Activated CD8-positive, alpha-beta T cell treated with anti-CD3 and anti-CD28 coated beads for 36 hours (primary cell): ENCODE measurements at regions of chr22 and their contacts with region 1.

Region 1: DNA sequence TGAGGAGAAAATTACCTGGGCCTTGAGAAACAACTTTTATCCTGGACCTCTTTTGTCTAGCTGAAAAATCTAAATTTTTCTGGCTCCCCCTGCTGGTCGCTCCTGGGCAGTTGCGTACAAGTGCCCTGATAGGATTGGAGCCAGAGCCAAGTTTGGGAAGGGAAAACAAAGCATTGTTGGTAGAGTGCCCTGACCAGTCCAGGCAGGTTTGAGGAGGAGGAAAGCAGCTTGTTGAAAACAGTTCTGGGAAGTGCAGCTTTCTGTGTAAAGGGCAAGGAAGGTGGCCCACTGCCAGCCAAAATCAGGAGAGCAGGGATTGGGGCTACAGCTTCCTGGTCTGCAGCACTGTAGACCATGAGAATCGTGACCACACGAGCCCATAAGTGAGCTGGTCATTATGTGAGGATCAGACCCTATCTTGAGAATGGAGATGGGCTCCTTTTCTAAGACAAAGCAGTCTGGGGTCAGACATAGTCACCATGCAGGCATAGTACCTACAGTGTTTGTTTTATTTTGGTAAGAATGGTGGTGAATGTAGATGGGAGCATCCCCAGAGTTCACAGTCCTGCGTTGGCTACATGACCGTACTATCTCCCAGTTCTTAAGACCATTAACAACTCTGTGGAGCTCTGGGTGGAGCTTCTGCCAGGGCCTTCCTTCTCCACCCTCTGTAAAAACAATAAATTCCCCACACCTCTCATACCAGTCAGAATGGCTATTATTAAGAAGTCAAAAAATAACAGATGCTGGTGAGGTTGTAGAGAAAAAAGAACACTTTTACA is 21.3 kb upstream of the PIK3IP1 start:
- DNase-seq: peak; percentile 80
- ATAC-seq: peak; percentile 70
- H3K4me3 Mint-ChIP-seq: no peak overlapping the region
- H3K27ac Mint-ChIP-seq: no peak overlapping the region
- H3K4me1 Mint-ChIP-seq: peaks cover 10% of the 10 kb centered on the region
- H3K27me3 Mint-ChIP-seq: no peaks in the 10 kb centered on the region
- CTCF ChIP-seq: peak; percentile 95

Region 2: DNA sequence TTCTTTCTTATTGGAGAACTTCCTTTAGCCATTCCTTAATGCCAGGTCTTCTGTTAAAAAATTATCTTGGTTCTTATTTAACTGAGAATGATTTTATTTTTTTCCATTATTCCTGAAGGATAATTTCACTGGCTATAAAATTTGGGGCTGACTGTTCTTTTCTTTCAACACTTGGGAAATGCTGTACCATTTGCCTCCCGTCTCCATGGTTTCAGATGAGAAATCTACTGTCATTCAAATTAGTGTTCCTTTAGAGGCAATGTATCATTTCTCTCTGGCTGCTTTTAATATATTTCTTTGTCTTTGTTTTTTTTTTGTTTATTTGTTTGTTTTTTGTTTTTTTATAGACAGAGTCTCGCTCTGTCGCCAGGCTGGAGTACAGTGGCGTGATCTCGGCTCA is 284.3 kb before region 1 on chr22:
- CTCF ChIA-PET with region 1: no interaction called
- POLR2A ChIA-PET with region 1: no interaction called
- intact Hi-C with region 1: no loop called
- DNase-seq: no peak
- ATAC-seq: no peak
- H3K4me3 Mint-ChIP-seq: no peak overlapping the region
- H3K27ac Mint-ChIP-seq: no peak overlapping the region
- H3K4me1 Mint-ChIP-seq: no peaks in the 10 kb centered on the region
- H3K27me3 Mint-ChIP-seq: no peaks in the 10 kb centered on the region
- CTCF ChIP-seq: no peak

Region 3: DNA sequence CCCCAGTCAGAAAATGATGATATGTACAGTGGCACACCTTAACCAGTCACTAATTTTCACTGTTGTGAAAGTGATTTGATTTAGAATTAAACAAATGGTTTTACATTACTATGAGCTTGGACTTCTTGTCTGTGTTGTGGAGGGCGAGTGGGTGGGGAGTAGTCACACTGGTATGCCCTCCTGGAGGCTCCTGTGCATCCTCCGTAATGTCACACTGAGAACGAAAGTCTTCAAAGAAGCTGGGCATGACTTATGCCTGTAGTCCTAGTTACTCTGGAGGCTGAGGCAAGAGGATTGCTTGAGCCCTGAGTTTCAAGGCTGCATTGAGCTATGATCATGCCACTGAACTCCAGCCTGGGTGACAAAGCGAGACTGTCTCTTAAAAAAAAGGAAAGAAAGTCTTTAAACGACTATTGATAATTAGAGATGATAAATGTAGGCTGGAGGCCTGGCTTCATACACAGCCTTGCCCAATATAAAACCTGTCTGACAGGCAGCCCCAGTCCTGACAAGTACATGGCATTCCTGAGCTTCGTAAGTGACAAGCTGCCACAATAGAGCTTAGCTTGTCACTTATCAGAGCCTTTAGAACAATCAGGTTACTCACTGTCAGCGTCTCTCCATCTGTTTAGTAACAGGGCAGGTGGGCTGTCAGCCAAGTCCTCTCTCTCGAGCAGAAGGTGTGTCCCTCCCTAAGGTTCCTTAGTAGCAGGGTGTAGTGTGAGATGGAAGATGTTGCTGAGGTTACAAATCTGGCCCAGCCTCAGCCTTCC is 106.5 kb before region 1 on chr22:
- CTCF ChIA-PET with region 1: interaction called, 21 read pairs
- POLR2A ChIA-PET with region 1: no interaction called
- intact Hi-C with region 1: loop called (anchors 5 kb)
- DNase-seq: peak; percentile 25
- ATAC-seq: no peak
- H3K4me3 Mint-ChIP-seq: no peak overlapping the region
- H3K27ac Mint-ChIP-seq: peak overlapping the region; percentile 7
- H3K4me1 Mint-ChIP-seq: peaks cover 19% of the 10 kb centered on the region
- H3K27me3 Mint-ChIP-seq: no peaks in the 10 kb centered on the region
- CTCF ChIP-seq: no peak

Region 4: GRCh38 chr22:31211862-31212730 is 101.5 kb before region 1 on chr22 and contains the start of gene LIMK2:
- CTCF ChIA-PET with region 1: interaction called, 21 read pairs
- POLR2A ChIA-PET with region 1: no interaction called
- intact Hi-C with region 1: loop called (anchors 5 kb)
- DNase-seq: peak; percentile 99
- ATAC-seq: peak; percentile 99
- H3K4me3 Mint-ChIP-seq: peak within 1 kb of the TSS; percentile 82
- H3K27ac Mint-ChIP-seq: peak within 1 kb of the TSS; percentile 82
- H3K4me1 Mint-ChIP-seq: peaks cover 34% of the 10 kb centered on the region
- H3K27me3 Mint-ChIP-seq: no peaks in the 10 kb centered on the region
- CTCF ChIP-seq: peak; percentile 83
- total RNA-seq, gene LIMK2: 23.2 to 25.5 TPM

Region 5: DNA sequence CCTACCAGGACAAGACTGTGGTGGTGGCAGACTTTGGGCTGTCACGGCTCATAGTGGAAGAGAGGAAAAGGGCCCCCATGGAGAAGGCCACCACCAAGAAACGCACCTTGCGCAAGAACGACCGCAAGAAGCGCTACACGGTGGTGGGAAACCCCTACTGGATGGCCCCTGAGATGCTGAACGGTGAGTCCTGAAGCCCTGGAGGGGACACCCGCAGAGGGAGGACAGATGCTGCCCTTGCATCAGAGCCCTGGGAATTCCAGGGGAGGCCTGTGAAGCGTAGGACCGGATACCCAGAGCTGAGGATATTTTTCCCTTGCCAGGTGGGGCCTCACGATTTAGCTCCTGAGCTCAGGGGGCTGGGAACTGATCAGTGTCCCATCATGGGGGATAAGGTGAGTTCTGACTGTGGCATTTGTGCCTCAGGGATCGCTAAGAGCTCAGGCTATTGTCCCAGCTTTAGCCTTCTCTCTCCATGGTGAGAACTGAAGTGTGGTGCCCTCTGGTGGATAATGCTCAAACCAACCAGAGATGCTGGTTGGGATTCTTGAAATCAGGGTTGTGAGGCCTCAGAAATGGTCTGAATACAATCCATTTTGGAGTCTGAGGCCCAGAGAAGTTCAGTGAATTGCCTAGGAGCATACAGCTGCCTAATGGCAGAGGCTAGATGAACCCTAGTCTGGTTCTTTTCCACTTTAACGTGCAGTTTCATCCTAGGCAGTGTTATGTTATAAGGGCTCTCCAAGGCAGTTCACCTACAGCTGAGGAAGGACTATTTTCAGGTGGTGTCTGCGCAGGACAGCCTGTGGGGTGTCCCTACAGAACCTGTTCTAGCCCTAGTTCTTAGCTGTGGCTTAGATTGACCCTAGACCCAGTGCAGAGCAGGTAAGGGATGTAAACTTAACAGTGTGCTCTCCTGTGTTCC is 40.8 kb before region 1 on chr22:
- CTCF ChIA-PET with region 1: interaction called, 18 read pairs
- POLR2A ChIA-PET with region 1: no interaction called
- intact Hi-C with region 1: no loop called
- DNase-seq: peak; percentile 66
- ATAC-seq: peak; percentile 85
- H3K4me3 Mint-ChIP-seq: no peak overlapping the region
- H3K27ac Mint-ChIP-seq: no peak overlapping the region
- H3K4me1 Mint-ChIP-seq: peaks cover 40% of the 10 kb centered on the region
- H3K27me3 Mint-ChIP-seq: no peaks in the 10 kb centered on the region
- CTCF ChIP-seq: peak; percentile 57

Region 6: DNA sequence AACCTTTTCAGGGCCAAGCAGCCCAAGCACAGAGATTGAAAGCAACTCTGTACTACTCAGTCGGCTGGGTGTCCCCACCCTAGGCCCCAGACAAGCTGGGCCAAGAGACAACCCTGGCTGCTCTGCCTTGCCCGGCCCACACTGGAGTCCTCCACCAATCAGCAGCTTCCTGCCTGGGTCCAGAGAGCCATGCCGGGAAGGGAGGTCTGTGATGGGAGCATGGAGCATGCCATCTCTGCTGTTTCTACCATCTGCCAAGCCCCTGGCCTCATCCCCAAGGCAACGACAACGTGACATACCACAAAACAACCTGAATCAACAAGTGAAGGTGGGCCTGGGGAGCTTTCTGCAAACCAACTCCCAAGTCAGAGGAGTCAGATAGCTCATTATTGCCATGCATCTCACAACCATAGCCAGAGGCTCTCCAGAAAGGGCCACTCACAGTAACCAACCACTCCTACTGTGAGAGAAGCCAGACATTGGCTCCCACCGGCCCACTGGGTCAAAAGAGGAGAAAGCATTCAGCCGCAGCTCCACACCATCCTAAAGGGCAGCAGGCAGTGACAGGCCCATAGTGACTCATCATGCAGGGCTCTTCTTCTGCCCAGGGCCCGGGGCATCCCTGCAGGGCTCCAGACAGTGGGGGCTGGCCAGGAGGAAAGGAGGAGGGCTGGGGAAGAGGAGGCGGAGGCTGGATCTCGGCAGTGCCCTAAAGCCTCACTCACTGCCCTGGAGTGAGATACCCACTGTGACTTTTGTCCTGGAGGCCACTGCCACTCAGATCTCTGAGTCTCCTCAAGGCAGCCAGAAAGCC is 14.5 kb after region 1 on chr22:
- CTCF ChIA-PET with region 1: interaction called, 19 read pairs
- POLR2A ChIA-PET with region 1: interaction called, 3 read pairs
- intact Hi-C with region 1: no loop called
- DNase-seq: no peak
- ATAC-seq: no peak
- H3K4me3 Mint-ChIP-seq: no peak overlapping the region
- H3K27ac Mint-ChIP-seq: no peak overlapping the region
- H3K4me1 Mint-ChIP-seq: peaks cover 24% of the 10 kb centered on the region
- H3K27me3 Mint-ChIP-seq: no peaks in the 10 kb centered on the region
- CTCF ChIP-seq: no peak

Region 7: DNA sequence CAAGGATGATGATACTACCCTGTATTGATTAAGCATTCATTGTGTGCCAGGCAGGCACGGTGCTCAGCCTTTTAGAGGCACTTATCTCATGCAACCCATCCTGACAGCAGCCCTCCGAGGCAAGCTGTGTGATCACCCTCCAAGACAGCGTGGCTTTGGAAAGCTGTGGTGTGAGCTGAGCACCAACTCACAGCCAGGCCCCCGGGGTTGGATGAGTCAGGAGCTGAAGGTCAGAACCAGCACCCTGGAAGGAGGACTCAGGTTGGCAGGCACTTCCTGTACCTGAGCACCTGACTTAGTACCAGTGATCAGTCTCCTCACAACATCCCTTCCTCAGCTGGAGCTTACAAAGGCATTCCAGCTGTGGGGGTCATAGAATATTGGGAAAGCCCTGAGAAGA is 23.6 kb after region 1 on chr22:
- CTCF ChIA-PET with region 1: interaction called, 19 read pairs
- POLR2A ChIA-PET with region 1: interaction called, 3 read pairs
- intact Hi-C with region 1: no loop called
- DNase-seq: peak; percentile 69
- ATAC-seq: peak; percentile 88
- H3K4me3 Mint-ChIP-seq: no peak overlapping the region
- H3K27ac Mint-ChIP-seq: peak overlapping the region; percentile 76
- H3K4me1 Mint-ChIP-seq: peaks cover 56% of the 10 kb centered on the region
- H3K27me3 Mint-ChIP-seq: no peaks in the 10 kb centered on the region
- CTCF ChIP-seq: no peak